Right cardiac atrium (tissue), 5 donors: ENCODE measurements at regions of chr16 and their contacts with region 1.

Region 1: GRCh38 chr16:84726079-84726668 is 26.4 kb downstream of the USP10 start:
- DNase-seq: peak; percentile 92 to 97 (median 95)
- ATAC-seq: peak; percentile 81 to 83
- H3K4me3 ChIP-seq: no peak overlapping the region
- H3K27ac ChIP-seq: no peak overlapping the region
- H3K4me1 ChIP-seq: peaks cover 5% of the 10 kb centered on the region
- H3K27me3 ChIP-seq: no peaks in the 10 kb centered on the region

Region 2: GRCh38 chr16:84511180-84511824 is 214.9 kb before region 1 on chr16:
- intact Hi-C with region 1: loop called in 2 of 4 experiments (anchors 5 to 10 kb)
- DNase-seq: peak; percentile 83 to 92 (median 91)
- ATAC-seq: peak; percentile 71 to 73
- H3K4me3 ChIP-seq: no peak overlapping the region
- H3K27ac ChIP-seq: no peak overlapping the region
- H3K4me1 ChIP-seq: no peaks in the 10 kb centered on the region
- H3K27me3 ChIP-seq: no peaks in the 10 kb centered on the region

Region 3: GRCh38 chr16:84617791-84618580 is 108.2 kb before region 1 on chr16 and contains the start of gene COTL1:
- intact Hi-C with region 1: loop called in 3 of 4 experiments (anchors 5 to 10 kb)
- DNase-seq: peak; percentile 98 to 99 (median 99)
- ATAC-seq: peak; percentile 93 to 94
- H3K4me3 ChIP-seq: peak within 1 kb of the TSS; percentile 77
- H3K27ac ChIP-seq: peak within 1 kb of the TSS; percentile 53
- H3K4me1 ChIP-seq: no peaks in the 10 kb centered on the region
- H3K27me3 ChIP-seq: no peaks in the 10 kb centered on the region
- total RNA-seq, gene COTL1: 12.7 to 26.9 (median 23.5) TPM

Region 4: GRCh38 chr16:84629580-84629979 is 96.6 kb before region 1 on chr16:
- intact Hi-C with region 1: loop called (anchors 5 to 10 kb)
- DNase-seq: no peak
- ATAC-seq: no peak
- H3K4me3 ChIP-seq: no peak overlapping the region
- H3K27ac ChIP-seq: no peak overlapping the region
- H3K4me1 ChIP-seq: no peaks in the 10 kb centered on the region
- H3K27me3 ChIP-seq: no peaks in the 10 kb centered on the region

Region 5: DNA sequence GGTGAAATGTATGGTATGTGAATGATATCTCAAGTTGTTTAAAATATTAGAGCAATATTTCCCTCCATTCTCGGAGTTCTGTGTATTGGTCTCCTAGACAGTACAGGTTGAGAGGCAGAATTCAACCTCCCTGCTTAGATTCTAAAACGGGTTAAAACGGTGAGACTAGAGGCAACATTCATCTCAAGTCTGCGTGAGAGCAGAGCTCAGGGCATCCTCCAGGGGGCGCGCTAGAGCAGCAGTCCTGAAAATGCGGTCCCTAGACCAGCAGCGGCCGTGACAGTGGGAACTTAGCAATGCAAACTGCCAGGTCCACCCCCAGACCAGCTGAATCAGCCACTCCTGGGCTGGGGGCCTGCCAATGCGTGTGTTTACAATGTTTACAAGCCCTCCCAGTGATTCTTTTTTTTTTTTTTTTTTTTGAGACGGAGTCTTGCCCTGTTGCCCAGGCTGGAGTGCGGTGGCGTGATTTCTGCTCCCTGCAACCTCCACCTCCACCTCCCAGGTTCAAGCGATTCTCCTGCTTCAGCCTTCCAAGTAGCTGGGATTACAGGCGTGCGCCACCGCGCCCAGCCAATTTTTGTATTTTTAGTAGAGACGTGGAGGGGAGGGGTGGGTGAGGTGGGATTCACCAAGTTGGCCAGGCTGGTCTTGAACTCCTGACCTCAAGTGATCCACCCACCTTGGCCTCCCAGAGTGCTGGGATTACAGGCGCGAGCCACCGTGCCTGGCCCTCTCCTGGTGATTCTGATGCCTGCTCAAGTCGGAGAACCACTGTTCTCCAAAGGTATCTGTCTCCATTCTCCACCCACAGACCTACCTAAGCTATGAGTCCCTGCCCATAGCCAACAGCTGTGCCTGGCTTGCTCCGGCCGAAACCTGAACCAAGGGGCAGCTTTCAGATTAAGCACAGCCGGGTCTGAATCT is 53.6 kb before region 1 on chr16:
- intact Hi-C with region 1: loop called (anchors 2 to 10 kb)
- DNase-seq: peak; percentile 76 to 92 (median 91)
- ATAC-seq: peak; percentile 75 to 78
- H3K4me3 ChIP-seq: no peak overlapping the region
- H3K27ac ChIP-seq: no peak overlapping the region
- H3K4me1 ChIP-seq: no peaks in the 10 kb centered on the region
- H3K27me3 ChIP-seq: no peaks in the 10 kb centered on the region

Region 6: DNA sequence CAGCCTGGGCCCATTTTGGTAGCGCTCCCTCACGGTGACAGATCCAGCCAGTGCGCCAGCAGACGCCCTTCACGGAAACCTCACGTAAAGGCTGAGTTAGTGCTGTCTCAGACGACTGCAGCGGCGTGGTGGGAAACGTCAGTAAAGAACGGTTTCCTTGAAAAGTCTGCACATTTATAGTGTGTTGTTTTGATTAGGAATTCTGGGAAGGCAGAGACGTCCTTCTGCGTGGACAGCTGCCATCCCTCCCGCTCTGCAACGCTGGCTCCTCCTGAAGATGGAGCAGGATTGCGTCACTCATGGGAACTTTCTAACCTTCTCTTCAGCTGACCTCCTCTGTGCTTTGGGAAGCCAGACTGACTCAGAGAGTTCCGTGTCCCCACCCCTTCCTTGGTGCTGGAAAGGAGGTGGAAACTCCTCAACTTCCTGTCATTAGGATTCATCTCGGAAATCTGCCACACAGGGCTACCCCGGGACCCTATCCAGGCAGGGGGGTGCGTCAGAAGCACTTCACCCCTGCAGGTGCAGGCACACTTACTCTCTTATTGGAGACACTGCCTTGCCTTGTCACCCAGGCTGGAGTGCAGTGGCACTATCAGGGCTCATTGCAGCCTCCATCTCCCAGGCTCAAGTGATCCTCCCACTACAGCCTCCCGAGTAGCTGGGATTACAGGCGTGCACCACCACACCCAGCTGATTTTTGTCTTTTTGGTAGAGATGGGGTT is 69.3 kb after region 1 on chr16:
- intact Hi-C with region 1: no loop called
- DNase-seq: peak; percentile 88 to 93 (median 91)
- ATAC-seq: peak; percentile 97 to 98
- H3K4me3 ChIP-seq: no peak overlapping the region
- H3K27ac ChIP-seq: peak overlapping the region; percentile 47
- H3K4me1 ChIP-seq: no peaks in the 10 kb centered on the region
- H3K27me3 ChIP-seq: no peaks in the 10 kb centered on the region